ENCODE measurements at regions of chr6 and their contacts with region 1.

Region 1: GRCh38 chr6:30541515-30542403 is 14.5 kb downstream of the GNL1 start:
- DNase-seq: peak; percentile 52
- H3K4me3 ChIP-seq: peak overlapping the region in 1 of 3 experiments; percentile 24
- H3K27ac ChIP-seq: no peak overlapping the region
- H3K4me1 ChIP-seq: peaks cover 6% of the 10 kb centered on the region
- H3K27me3 ChIP-seq: no peaks in the 10 kb centered on the region
- CTCF ChIP-seq: peak; percentile 93 to 99 (median 96)

Region 2: GRCh38 chr6:30626484-30627366 is 85.0 kb after region 1 on chr6 and contains the start of gene ATAT1:
- dilution Hi-C with region 1: no loop called
- DNase-seq: no peak
- H3K4me3 ChIP-seq: peak within 1 kb of the TSS; percentile 56 to 93 (median 92)
- H3K27ac ChIP-seq: peak within 1 kb of the TSS; percentile 86
- H3K4me1 ChIP-seq: peaks cover 12% of the 10 kb centered on the region
- H3K27me3 ChIP-seq: no peaks in the 10 kb centered on the region
- CTCF ChIP-seq: peak; percentile 41 to 49 (median 46)
- polyA plus RNA-seq, gene ATAT1: 3.8 to 6.0 TPM (median 5.4 TPM) in 3 replicates

Region 3: GRCh38 chr6:30730601-30731435 is 189.1 kb after region 1 on chr6:
- dilution Hi-C with region 1: loop called (anchors 10 kb)
- DNase-seq: no peak
- H3K4me3 ChIP-seq: peak overlapping the region; percentile 18 to 48 (median 21)
- H3K27ac ChIP-seq: no peak overlapping the region
- H3K4me1 ChIP-seq: peaks cover 7% of the 10 kb centered on the region
- H3K27me3 ChIP-seq: no peaks in the 10 kb centered on the region
- CTCF ChIP-seq: peak; percentile 85 to 99 (median 93)

Region 4: DNA sequence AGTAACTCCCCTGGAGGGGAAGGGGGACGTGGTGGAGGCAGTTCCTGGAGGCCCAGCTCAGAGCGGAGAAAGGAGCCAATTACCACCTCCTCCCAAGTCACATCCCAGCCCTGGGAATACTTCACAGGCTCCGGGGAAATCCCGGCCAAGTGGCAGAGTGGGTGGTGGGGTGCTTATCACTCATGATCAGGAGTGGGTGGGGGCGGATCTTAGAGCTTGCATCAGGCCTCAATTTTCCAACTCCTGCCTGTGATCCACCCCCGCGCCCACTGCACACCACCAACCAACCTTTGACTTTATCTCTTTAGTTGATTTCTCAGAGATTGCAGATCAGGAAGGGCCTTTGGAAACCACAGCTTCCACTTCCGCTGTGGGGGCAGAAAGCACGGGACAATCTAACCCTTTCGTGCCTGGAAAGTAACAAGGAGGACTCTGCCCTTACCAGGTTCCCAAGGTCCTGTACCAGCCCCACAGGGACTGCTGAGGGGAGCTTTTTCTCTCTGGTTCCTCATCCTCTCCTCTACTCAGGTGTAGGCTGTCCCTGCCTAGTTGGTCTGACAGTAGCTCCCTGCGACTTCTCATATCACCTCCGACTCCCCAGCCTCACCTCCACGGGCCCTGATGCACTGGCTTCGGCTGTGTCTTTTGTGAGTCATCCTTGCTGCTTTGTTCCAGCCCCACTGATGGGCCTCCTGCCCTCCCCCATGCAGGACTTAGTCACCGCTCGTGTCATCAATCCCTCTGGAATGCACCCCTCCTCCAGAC is 227.5 kb after region 1 on chr6:
- dilution Hi-C with region 1: no loop called
- DNase-seq: peak; percentile 95
- H3K4me3 ChIP-seq: peak overlapping the region; percentile 19 to 47 (median 27)
- H3K27ac ChIP-seq: peak overlapping the region; percentile 95
- H3K4me1 ChIP-seq: peaks cover 34% of the 10 kb centered on the region
- H3K27me3 ChIP-seq: no peaks in the 10 kb centered on the region
- CTCF ChIP-seq: no peak